ENCODE measurements at regions of chr18 and their contacts with region 1.

Region 1: GRCh38 chr18:12947355-12948041 is at the start of gene SEH1L:
- DNase-seq: peak; percentile 100
- H3K4me3 Mint-ChIP-seq: peak within 1 kb of the TSS; percentile 99
- H3K27ac Mint-ChIP-seq: peak within 1 kb of the TSS; percentile 97
- H3K4me1 Mint-ChIP-seq: peaks cover 40% of the 10 kb centered on the region
- H3K27me3 Mint-ChIP-seq: no peaks in the 10 kb centered on the region
- total RNA-seq, gene SEH1L: 82.6 to 85.4 TPM

Region 2: GRCh38 chr18:11980555-11981382 is 966.7 kb before region 1 on chr18:
- CTCF ChIA-PET with region 1: no interaction called
- intact Hi-C with region 1: loop called (anchors 1 kb)
- DNase-seq: peak; percentile 99
- H3K4me3 Mint-ChIP-seq: peak overlapping the region; percentile 86
- H3K27ac Mint-ChIP-seq: peak overlapping the region; percentile 83
- H3K4me1 Mint-ChIP-seq: peaks cover 14% of the 10 kb centered on the region
- H3K27me3 Mint-ChIP-seq: peaks cover 2% of the 10 kb centered on the region

Region 3: GRCh38 chr18:12883684-12884405 is 63.7 kb before region 1 on chr18 and contains the start of gene PTPN2:
- CTCF ChIA-PET with region 1: no interaction called
- intact Hi-C with region 1: loop called (anchors 1 kb)
- DNase-seq: peak; percentile 92
- H3K4me3 Mint-ChIP-seq: peak within 1 kb of the TSS; percentile 89
- H3K27ac Mint-ChIP-seq: peak within 1 kb of the TSS; percentile 90
- H3K4me1 Mint-ChIP-seq: peaks cover 53% of the 10 kb centered on the region
- H3K27me3 Mint-ChIP-seq: no peaks in the 10 kb centered on the region
- total RNA-seq, gene PTPN2: 68.5 to 71.8 TPM

Region 4: GRCh38 chr18:13137670-13138419 is 190.3 kb after region 1 on chr18:
- CTCF ChIA-PET with region 1: no interaction called
- intact Hi-C with region 1: loop called (anchors 2 kb)
- DNase-seq: peak; percentile 74
- H3K4me3 Mint-ChIP-seq: peak overlapping the region; percentile 96
- H3K27ac Mint-ChIP-seq: peak overlapping the region; percentile 75
- H3K4me1 Mint-ChIP-seq: peaks cover 24% of the 10 kb centered on the region
- H3K27me3 Mint-ChIP-seq: no peaks in the 10 kb centered on the region

Region 5: DNA sequence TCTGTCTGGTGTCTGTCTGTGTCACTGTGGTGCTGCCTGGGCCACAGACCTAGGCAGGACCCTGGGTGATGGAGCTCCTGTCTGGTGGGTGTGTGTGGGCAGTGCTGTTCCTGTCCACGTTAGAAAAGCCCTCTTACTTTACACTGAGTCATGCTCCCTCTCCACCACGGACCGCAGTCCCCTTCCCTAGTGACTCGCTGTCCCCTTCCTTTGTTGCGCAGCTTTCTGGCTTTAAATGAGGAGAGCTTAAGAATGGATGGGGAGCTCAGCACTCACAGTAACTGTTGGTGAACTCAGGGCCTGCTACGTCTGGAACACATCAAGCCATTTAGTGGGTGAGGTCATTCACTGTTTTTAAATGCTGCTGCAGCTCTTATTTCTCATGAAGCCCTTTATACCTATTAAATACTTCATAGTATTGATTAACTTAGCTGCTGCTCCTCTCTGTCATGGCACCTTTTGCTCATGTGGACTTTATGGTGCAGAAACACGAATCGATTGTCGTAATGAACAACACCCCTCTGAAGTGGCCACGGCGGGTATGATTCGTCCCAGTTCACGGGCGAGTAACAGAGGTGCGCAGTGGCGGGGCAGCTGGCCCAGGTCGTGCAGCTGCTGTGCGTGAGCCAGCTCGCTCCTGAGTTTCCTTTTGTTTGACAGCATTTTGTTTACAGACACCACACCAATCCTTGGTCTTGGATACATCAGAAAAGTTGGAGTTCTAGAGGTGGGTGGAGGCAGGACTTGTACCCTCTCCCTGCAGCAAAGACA is 371.4 kb after region 1 on chr18:
- CTCF ChIA-PET with region 1: no interaction called
- intact Hi-C with region 1: no loop called
- DNase-seq: no peak
- H3K4me3 Mint-ChIP-seq: no peak overlapping the region
- H3K27ac Mint-ChIP-seq: no peak overlapping the region
- H3K4me1 Mint-ChIP-seq: peaks cover 9% of the 10 kb centered on the region
- H3K27me3 Mint-ChIP-seq: no peaks in the 10 kb centered on the region

Region 6: GRCh38 chr18:13375302-13376255 is 428.1 kb after region 1 on chr18:
- CTCF ChIA-PET with region 1: no interaction called
- intact Hi-C with region 1: loop called (anchors 5 kb)
- DNase-seq: peak; percentile 93
- H3K4me3 Mint-ChIP-seq: peak overlapping the region; percentile 32
- H3K27ac Mint-ChIP-seq: peak overlapping the region; percentile 86
- H3K4me1 Mint-ChIP-seq: peaks cover 81% of the 10 kb centered on the region
- H3K27me3 Mint-ChIP-seq: no peaks in the 10 kb centered on the region

Region 7: DNA sequence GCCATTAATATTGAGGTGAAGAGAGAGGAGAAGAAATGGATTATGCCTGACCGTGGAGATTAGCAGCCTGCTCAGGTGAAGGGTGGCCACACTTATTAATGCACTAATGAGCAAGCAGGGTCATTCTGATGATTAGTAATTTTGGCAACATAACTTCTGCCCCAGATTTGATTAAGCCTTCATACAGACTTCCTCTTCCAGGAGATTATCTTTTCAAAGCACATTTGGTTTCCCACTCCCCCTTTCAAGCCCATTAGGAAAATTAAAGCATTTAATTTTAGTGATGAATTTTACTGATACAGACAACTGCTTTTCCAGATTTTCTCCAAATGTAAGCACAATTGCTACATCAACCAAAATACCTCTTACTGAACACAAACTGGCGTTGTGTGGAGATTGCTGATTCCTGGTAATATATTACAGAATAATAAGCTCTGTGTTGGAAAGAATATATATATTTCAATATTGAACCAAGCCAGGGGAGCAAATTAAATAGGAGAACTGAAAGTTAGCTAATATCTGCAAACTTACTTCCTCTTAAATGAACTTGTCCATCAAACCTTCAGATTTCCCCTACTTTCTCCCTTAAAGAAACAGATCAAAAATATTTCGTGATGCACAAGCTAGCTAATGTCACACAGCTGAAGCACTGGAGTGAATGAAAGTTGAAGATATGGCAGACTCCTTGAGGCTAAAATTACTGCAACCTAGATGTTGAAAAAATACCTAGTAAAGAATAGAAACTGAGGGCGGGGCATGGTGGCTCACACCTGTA is 638.1 kb after region 1 on chr18:
- CTCF ChIA-PET with region 1: no interaction called
- intact Hi-C with region 1: no loop called
- DNase-seq: no peak
- H3K4me3 Mint-ChIP-seq: no peak overlapping the region
- H3K27ac Mint-ChIP-seq: no peak overlapping the region
- H3K4me1 Mint-ChIP-seq: peaks cover 44% of the 10 kb centered on the region
- H3K27me3 Mint-ChIP-seq: no peaks in the 10 kb centered on the region

Measured in activated naive CD4-positive, alpha-beta T cell treated with anti-CD3 and anti-CD28 coated beads for 36 hours (primary cell).